CD14-positive monocyte (primary cell): ENCODE measurements at regions of chr12 and their contacts with region 1.

Region 1: DNA sequence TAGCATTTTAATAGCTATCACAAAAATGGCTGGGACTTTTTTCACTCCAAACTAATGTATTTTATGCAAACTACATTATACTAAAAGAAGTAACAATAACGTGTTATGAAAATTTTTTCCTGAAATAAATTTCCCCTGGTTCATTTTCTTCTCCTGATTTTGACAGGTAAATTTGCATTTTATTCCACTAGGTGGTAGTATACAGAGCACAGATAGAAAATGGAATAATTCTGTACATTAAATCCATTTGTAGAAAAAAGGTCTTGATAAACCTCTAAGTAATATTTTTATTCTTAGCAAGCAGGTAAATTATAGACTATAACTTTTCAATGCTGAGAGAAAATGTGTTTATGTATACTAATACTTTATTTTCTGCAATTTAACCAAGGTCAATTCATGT is 96.5 kb downstream of the BCAT1 start:
- DNase-seq: no peak
- H3K4me3 ChIP-seq: no peak overlapping the region
- H3K4me3 Mint-ChIP-seq: no peak overlapping the region
- H3K27ac ChIP-seq: no peak overlapping the region
- H3K27ac Mint-ChIP-seq: no peak overlapping the region
- H3K4me1 ChIP-seq: peaks cover 0 to 4% of the 10 kb centered on the region in 2 donors
- H3K4me1 Mint-ChIP-seq: peaks cover 18% of the 10 kb centered on the region
- H3K27me3 ChIP-seq: no peaks in the 10 kb centered on the region
- H3K27me3 Mint-ChIP-seq: no peaks in the 10 kb centered on the region
- CTCF ChIP-seq: peak; percentile 46

Region 2: GRCh38 chr12:24894879-24895278 is 42.5 kb after region 1 on chr12:
- intact Hi-C with region 1: loop called in 1 of 2 experiments (anchors 5 kb)
- DNase-seq: no peak
- H3K4me3 ChIP-seq: no peak overlapping the region
- H3K4me3 Mint-ChIP-seq: no peak overlapping the region
- H3K27ac ChIP-seq: no peak overlapping the region
- H3K27ac Mint-ChIP-seq: no peak overlapping the region
- H3K4me1 ChIP-seq: peaks cover 18 to 27% of the 10 kb centered on the region in 2 donors
- H3K4me1 Mint-ChIP-seq: peaks cover 20% of the 10 kb centered on the region
- H3K27me3 ChIP-seq: no peaks in the 10 kb centered on the region
- H3K27me3 Mint-ChIP-seq: no peaks in the 10 kb centered on the region
- CTCF ChIP-seq: no peak